ENCODE measurements at regions of chr1 and their contacts with region 1.

Region 1: GRCh38 chr1:46442317-46443161 is 47.1 kb upstream of the DMBX1 start:
- DNase-seq: peak; percentile 96
- ATAC-seq: peak; percentile 88
- H3K4me3 ChIP-seq: peak overlapping the region; percentile 60 to 63
- H3K27ac ChIP-seq: peak overlapping the region; percentile 66
- H3K4me1 ChIP-seq: peaks cover 0 to 16% of the 10 kb centered on the region in 2 experiments; a peak in 2 of 4 replicates
- H3K27me3 ChIP-seq: no peaks in the 10 kb centered on the region
- CTCF ChIP-seq: peak; percentile 85 to 94 (median 91)
- POLR2A ChIP-seq: peak; percentile 61
- RAD21 ChIP-seq: peak; percentile 80

Region 2: DNA sequence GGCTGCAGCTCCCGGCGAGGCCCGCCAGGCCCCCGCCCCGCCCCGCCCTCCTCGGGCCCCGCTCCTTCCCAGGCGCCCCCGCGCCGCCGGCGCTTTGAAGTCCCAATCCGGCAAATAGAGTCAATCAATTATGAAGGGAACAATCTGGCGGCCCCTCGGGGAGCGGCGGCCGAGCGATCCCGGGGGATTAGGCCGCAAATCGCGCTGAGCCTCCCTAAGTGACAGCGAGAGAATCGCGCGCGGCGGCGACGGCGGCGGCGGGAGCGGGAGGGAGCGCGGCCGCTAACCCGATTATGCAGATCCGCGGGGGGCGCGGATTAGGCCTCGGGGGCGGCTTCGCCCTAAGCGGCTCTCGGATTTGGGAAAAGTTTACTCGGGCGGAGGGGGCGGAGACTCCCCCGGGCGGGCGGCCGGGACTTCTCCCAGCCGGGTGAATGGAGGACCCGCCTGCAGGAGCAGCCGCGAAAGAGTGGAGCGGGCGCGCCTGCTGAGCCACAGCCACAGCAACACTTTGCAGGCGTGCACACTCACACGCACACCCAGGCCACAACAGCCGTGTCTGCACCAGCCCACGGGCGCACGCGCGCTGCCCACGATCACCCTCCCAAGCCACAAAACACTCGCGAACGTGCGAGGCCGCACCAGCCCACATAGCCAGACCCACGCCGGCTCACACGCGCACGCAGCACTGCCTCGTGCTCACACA is 24.1 kb after region 1 on chr1:
- CTCF ChIA-PET with region 1: no interaction called
- POLR2A ChIA-PET with region 1: no interaction called
- RAD21 ChIA-PET with region 1: no interaction called
- intact Hi-C with region 1: no loop called
- DNase-seq: no peak
- ATAC-seq: peak; percentile 64
- H3K4me3 ChIP-seq: peak overlapping the region; percentile 29 to 54
- H3K27ac ChIP-seq: no peak overlapping the region
- H3K4me1 ChIP-seq: peaks cover 3 to 17% of the 10 kb centered on the region in 2 experiments; a peak in 2 of 4 replicates
- H3K27me3 ChIP-seq: no peaks in the 10 kb centered on the region
- CTCF ChIP-seq: no peak
- POLR2A ChIP-seq: no peak
- RAD21 ChIP-seq: no peak

Region 3: DNA sequence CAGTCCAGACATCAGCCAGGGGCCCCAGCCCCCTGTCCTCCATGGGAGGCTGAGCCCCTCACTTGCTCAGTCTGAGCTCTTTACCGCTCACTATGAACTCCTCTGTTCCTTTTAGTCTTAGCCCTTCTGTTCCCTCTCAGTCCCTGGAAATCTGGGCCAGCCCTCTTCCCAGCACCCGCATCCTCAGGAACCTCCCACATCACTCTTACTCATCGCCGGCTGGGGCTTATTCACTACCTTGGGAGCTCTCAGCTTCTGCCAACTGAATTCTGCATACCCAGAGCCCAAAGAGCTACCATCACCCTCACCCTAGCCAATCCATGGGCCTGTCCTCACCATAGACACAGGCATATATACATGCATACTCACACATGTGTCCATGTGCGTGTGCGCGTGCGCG is 97.4 kb after region 1 on chr1:
- CTCF ChIA-PET with region 1: interaction called, 18 read pairs
- POLR2A ChIA-PET with region 1: no interaction called
- RAD21 ChIA-PET with region 1: interaction called in 1 of 2 experiments, 4 read pairs
- intact Hi-C with region 1: no loop called
- DNase-seq: no peak
- ATAC-seq: peak; percentile 50
- H3K4me3 ChIP-seq: no peak overlapping the region
- H3K27ac ChIP-seq: no peak overlapping the region
- H3K4me1 ChIP-seq: peaks cover 2 to 15% of the 10 kb centered on the region in 2 experiments; a peak in 3 of 4 replicates
- H3K27me3 ChIP-seq: 0 out of 2 replicates have a peak, but pooled peaks cover 3% of the 10 kb centered on the region
- CTCF ChIP-seq: no peak
- POLR2A ChIP-seq: no peak
- RAD21 ChIP-seq: no peak

Region 4: DNA sequence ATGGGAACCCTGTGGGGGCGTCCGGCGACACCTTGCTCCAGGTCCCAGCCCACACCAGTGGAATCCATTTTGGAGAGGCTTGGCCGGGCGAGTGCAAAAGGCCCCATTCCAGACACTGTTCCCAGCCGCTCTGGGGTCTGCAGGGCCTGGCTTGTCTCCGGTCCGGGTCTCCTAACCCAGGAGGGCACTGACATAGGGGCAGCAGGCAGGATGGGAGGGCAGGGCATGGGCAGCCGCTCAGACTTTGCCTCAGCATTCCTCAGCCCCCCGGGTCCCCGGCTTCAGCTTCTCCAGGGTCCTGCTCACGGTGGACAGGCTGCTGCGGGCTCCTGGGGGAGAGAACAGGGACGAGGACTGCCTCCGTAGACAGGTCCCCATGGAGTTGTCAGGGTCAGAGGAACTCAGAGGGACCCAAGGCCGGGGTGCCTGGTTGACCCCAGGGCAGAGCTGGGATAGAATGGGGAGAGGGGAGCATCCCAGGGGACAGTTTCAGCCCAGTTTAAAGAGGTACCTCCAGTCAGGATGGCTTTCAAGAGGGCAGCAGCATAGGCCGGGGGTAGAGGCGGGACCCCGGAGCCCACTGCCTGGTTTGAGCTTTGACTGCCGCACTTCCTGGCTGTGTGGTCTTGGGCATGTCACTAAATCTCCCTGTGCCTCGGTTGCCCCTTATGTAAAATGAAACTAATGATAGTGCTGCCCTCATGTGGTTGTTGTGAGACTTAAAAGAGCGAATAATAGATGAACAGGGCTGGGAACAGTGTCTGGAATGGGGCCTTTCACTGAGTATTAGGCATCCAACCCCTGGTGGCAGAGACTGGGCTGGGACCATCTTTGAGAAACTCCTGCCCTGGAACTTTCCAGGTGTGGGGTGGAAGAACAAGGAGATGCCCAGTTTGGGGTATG is 105.2 kb after region 1 on chr1:
- CTCF ChIA-PET with region 1: interaction called, 19 read pairs
- POLR2A ChIA-PET with region 1: no interaction called
- RAD21 ChIA-PET with region 1: interaction called, 3 to 4 read pairs
- intact Hi-C with region 1: loop called (anchors 1 kb)
- DNase-seq: peak; percentile 65
- ATAC-seq: peak; percentile 92
- H3K4me3 ChIP-seq: peak overlapping the region in 1 of 2 experiments; percentile 10; a peak in 1 of 4 replicates
- H3K27ac ChIP-seq: no peak overlapping the region
- H3K4me1 ChIP-seq: peaks cover 0 to 7% of the 10 kb centered on the region in 2 experiments; a peak in 1 of 4 replicates
- H3K27me3 ChIP-seq: no peaks in the 10 kb centered on the region
- CTCF ChIP-seq: peak; percentile 56 to 87 (median 71)
- POLR2A ChIP-seq: no peak
- RAD21 ChIP-seq: peak; percentile 81

Measured in HCT116 (cell line).